ENCODE measurements at regions of chr15 and their contacts with region 1.

Region 1: GRCh38 chr15:42056934-42057779 is 36.3 kb upstream of the PLA2G4E start:
- DNase-seq: no peak
- ATAC-seq: peak; percentile 80
- H3K4me3 Mint-ChIP-seq: peak overlapping the region; percentile 45
- H3K27ac Mint-ChIP-seq: no peak overlapping the region
- H3K4me1 Mint-ChIP-seq: peaks cover 13% of the 10 kb centered on the region
- H3K27me3 Mint-ChIP-seq: peaks cover 32% of the 10 kb centered on the region
- CTCF ChIP-seq: no peak

Region 2: DNA sequence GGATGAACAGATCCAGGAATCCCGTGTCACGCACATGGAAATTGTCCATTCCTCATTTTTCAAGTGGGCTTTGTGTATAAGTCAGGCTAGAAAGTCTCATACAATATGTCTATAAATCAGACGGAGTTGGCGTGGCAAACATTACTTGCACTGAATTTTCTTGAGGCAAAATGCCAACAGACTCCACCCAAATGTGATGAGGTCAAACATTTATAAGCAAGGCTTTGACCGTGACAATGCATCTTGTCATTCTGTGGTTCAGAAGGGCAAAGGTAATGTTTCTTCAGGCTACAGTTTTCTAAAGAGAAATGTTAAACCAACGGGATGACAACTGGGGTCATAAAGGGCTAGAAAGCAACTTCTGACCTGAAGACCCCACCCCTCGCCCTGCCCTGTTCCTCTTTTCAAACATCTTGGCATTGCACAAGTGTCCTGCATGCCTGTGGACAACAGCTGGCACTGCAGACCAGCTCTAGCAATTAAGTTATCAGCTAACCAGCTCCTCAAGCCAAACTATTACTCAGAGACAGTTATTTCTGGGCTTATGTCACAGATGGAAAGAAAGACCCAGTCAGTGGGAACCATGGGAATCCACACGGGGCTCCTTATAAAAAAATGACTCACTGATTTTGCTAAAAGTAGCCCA is 126.8 kb before region 1 on chr15:
- CTCF ChIA-PET with region 1: no interaction called
- POLR2A ChIA-PET with region 1: no interaction called
- intact Hi-C with region 1: loop called (anchors 5 kb)
- DNase-seq: no peak
- ATAC-seq: no peak
- H3K4me3 Mint-ChIP-seq: peak overlapping the region; percentile 65
- H3K27ac Mint-ChIP-seq: peak overlapping the region; percentile 88
- H3K4me1 Mint-ChIP-seq: peaks cover 86% of the 10 kb centered on the region
- H3K27me3 Mint-ChIP-seq: no peaks in the 10 kb centered on the region
- CTCF ChIP-seq: no peak

Region 3: GRCh38 chr15:41989259-41989933 is 67.8 kb before region 1 on chr15:
- CTCF ChIA-PET with region 1: interaction called, 63 read pairs
- POLR2A ChIA-PET with region 1: interaction called, 3 read pairs
- intact Hi-C with region 1: loop called (anchors 1 kb)
- DNase-seq: peak; percentile 83
- ATAC-seq: peak; percentile 100
- H3K4me3 Mint-ChIP-seq: no peak overlapping the region
- H3K27ac Mint-ChIP-seq: no peak overlapping the region
- H3K4me1 Mint-ChIP-seq: no peaks in the 10 kb centered on the region
- H3K27me3 Mint-ChIP-seq: peaks cover 6% of the 10 kb centered on the region
- CTCF ChIP-seq: peak; percentile 85

Region 4: GRCh38 chr15:42035435-42035761 is 21.8 kb before region 1 on chr15:
- CTCF ChIA-PET with region 1: no interaction called
- POLR2A ChIA-PET with region 1: no interaction called
- intact Hi-C with region 1: loop called (anchors 2 kb)
- DNase-seq: no peak
- ATAC-seq: peak; percentile 79
- H3K4me3 Mint-ChIP-seq: peak overlapping the region; percentile 30
- H3K27ac Mint-ChIP-seq: peak overlapping the region; percentile 68
- H3K4me1 Mint-ChIP-seq: peaks cover 35% of the 10 kb centered on the region
- H3K27me3 Mint-ChIP-seq: no peaks in the 10 kb centered on the region
- CTCF ChIP-seq: no peak

Region 5: GRCh38 chr15:42073418-42073817 is 16.3 kb after region 1 on chr15:
- CTCF ChIA-PET with region 1: no interaction called
- POLR2A ChIA-PET with region 1: no interaction called
- intact Hi-C with region 1: no loop called
- DNase-seq: no peak
- ATAC-seq: no peak
- H3K4me3 Mint-ChIP-seq: no peak overlapping the region
- H3K27ac Mint-ChIP-seq: no peak overlapping the region
- H3K4me1 Mint-ChIP-seq: no peaks in the 10 kb centered on the region
- H3K27me3 Mint-ChIP-seq: peaks cover 5% of the 10 kb centered on the region
- CTCF ChIP-seq: no peak

Region 6: GRCh38 chr15:42474827-42475226 is 417.7 kb after region 1 on chr15:
- CTCF ChIA-PET with region 1: no interaction called
- POLR2A ChIA-PET with region 1: no interaction called
- intact Hi-C with region 1: loop called (anchors 10 kb)
- DNase-seq: no peak
- ATAC-seq: no peak
- H3K4me3 Mint-ChIP-seq: no peak overlapping the region
- H3K27ac Mint-ChIP-seq: peak overlapping the region; percentile 59
- H3K4me1 Mint-ChIP-seq: peaks cover 25% of the 10 kb centered on the region
- H3K27me3 Mint-ChIP-seq: no peaks in the 10 kb centered on the region
- CTCF ChIP-seq: no peak

Measured in activated B cell treated with CpG ODN at 0.5 μM for 24 hours (primary cell).